ENCODE measurements at regions of chr3 and their contacts with region 1.

Region 1: DNA sequence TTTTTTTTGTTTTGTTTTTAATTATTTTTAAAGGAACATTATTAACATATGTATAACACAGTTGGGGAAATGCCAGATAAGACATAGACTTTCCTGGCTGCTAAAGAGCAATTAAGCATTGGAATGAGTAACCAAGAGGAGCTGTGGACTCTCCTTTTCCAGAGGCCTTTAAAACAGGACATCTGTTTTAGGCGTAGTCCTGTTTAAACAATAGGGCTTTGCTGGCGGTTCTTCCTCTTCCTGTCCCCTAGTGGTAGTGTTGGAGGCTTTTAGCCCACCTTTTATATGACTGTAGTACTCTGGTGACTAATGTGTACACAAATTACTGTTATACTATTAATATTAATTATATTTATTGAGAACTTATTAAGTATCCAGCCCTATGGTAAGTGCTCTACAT is 81.9 kb downstream of the PPARG start:
- DNase-seq: no peak
- ATAC-seq: no peak

Region 2: DNA sequence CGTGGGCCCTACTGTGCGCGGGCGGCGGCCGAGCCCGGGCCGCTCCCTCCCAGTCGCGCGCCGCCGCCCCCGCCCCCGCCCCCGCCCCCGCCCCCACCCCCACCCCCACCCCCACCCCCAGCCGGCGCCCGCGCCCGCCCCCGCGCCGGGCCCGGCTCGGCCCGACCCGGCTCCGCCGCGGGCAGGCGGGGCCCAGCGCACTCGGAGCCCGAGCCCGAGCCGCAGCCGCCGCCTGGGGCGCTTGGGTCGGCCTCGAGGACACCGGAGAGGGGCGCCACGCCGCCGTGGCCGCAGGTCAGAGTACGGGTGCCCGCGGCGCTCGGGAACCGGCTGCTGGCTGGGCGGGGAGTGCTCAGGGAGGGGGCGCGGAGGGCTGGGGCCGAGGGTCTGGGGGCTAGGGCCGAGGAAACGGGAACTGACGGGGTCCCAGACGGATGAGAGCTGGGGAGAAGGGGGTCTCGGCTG is 83.0 kb before region 1 on chr3:
- intact Hi-C with region 1: loop called (anchors 10 kb)
- DNase-seq: peak; percentile 81
- ATAC-seq: peak; percentile 93

Region 3: DNA sequence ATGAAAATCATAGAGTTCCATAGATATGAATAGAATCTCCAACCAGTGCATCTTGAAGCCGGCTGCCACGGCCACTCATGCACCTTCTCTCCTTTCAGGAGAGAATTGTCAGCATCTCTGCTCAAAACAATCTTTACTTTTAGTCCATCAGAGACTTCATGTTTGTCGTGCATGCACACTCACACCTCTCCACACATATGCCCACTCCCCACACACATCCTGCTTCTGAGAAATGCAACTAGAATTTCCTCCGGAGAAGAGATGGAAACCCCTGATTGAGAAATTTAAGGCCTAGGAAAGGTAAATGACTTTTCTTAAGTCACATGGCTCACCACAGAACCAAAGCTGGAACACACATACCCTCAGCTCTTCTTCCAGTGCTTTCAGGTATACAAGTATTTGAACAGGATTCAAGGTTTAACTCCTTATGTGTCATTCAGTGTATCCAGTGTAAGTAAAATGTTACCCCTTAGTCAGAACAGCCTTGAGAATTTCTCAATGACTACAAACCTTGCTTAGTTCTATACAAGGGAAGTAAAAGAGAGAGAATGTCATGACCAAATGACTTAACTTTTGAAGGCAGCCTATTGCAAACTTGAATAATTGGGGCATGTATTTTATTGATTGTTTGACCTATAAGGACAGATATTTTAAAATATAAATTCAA is 44.4 kb after region 1 on chr3:
- intact Hi-C with region 1: loop called (anchors 5 kb)
- DNase-seq: no peak
- ATAC-seq: no peak

Region 4: DNA sequence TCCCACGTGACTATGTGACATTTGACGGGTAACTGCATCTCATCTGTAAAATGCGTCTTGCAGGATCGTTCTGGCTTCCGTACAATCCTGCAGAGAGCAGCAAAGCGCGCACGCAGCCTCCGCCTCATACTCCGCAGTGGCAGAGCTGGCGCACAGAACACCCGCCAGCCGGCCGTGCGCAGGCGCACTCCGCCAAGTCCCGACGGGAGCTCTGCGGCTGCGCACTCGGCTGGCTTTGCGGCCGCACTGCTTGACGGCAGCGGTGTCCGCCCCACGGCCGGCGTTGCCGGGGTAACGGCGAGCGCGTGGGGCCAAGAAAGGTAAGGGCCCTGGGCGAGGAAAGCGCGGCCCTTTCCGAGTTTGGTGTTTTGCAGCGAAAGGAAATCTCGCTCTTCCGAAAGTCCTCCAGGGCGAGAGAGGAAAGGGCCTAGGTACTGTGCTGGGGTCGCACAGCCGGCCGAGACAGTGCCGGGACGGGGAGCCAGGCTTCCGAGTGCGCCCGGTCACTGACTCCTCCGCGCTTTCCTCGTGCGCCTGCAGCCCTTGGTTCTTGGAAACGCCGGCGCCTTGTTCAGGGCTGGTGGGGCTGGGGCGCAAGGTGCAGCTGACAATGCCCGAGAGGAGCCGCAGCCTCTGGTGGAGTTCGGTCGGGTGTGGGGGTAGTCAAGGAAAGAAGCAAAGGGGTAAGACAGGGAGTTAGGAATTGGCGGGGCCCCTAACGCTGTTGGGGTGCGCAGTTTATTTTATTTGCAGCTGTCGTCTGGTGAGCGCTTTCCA is 113.6 kb after region 1 on chr3 and contains the start of gene TSEN2:
- intact Hi-C with region 1: no loop called
- DNase-seq: peak; percentile 98
- ATAC-seq: peak; percentile 96
- total RNA-seq, gene TSEN2: 24.1 TPM

Region 5: DNA sequence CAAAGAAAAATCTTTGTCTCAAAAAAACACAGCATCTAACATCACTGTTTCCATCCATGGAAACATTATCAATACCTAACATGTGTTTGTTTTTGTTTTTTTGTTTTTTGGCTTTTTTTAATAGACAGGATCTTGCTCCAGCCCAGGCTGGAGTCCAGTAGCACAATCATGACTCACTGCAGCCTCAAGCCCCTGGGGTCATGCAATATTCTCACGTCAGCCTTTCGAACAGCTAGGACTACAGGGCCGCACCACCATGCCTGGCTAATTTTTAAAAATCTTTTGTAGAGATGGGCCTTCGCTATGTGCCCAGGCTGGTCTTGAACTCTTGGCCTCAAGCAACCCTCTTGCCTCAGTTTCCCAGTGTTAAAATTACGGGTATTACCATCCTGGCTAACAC is 240.4 kb after region 1 on chr3:
- intact Hi-C with region 1: no loop called
- DNase-seq: no peak
- ATAC-seq: no peak

Measured in Right ventricle myocardium inferior (tissue), 1 donor.